Activated T-helper 1 cell treated with anti-CD3 and anti-CD28 coated beads, Interleukin-12 subunit alpha, Interleukin-12 subunit beta, Interleukin-2, Interleukin-4 antibody, amounts not matched to agents 30 ng/mL and 10 ng/mL and 1 ng/mL, durations not matched to agents 14 hours and 24 hours and 36 hours (primary cell): ENCODE measurements at regions of chr7 and their contacts with region 1.

Region 1: GRCh38 chr7:76234931-76235441 is 33.3 kb downstream of the SRRM3 start:
- DNase-seq: peak; percentile 75
- H3K4me3 Mint-ChIP-seq: peak overlapping the region; percentile 53
- H3K27ac Mint-ChIP-seq: no peak overlapping the region
- H3K4me1 Mint-ChIP-seq: no peaks in the 10 kb centered on the region
- H3K27me3 Mint-ChIP-seq: peaks cover 27% of the 10 kb centered on the region

Region 2: GRCh38 chr7:76011442-76011861 is 223.5 kb before region 1 on chr7:
- intact Hi-C with region 1: no loop called
- DNase-seq: no peak
- H3K4me3 Mint-ChIP-seq: no peak overlapping the region
- H3K27ac Mint-ChIP-seq: no peak overlapping the region
- H3K4me1 Mint-ChIP-seq: peaks cover 35% of the 10 kb centered on the region
- H3K27me3 Mint-ChIP-seq: peaks cover 5% of the 10 kb centered on the region

Region 3: GRCh38 chr7:76166404-76167255 is 68.4 kb before region 1 on chr7:
- intact Hi-C with region 1: loop called (anchors 2 kb)
- DNase-seq: peak; percentile 93
- H3K4me3 Mint-ChIP-seq: peak overlapping the region; percentile 85
- H3K27ac Mint-ChIP-seq: peak overlapping the region; percentile 85
- H3K4me1 Mint-ChIP-seq: peaks cover 10% of the 10 kb centered on the region
- H3K27me3 Mint-ChIP-seq: peaks cover 2% of the 10 kb centered on the region

Region 4: DNA sequence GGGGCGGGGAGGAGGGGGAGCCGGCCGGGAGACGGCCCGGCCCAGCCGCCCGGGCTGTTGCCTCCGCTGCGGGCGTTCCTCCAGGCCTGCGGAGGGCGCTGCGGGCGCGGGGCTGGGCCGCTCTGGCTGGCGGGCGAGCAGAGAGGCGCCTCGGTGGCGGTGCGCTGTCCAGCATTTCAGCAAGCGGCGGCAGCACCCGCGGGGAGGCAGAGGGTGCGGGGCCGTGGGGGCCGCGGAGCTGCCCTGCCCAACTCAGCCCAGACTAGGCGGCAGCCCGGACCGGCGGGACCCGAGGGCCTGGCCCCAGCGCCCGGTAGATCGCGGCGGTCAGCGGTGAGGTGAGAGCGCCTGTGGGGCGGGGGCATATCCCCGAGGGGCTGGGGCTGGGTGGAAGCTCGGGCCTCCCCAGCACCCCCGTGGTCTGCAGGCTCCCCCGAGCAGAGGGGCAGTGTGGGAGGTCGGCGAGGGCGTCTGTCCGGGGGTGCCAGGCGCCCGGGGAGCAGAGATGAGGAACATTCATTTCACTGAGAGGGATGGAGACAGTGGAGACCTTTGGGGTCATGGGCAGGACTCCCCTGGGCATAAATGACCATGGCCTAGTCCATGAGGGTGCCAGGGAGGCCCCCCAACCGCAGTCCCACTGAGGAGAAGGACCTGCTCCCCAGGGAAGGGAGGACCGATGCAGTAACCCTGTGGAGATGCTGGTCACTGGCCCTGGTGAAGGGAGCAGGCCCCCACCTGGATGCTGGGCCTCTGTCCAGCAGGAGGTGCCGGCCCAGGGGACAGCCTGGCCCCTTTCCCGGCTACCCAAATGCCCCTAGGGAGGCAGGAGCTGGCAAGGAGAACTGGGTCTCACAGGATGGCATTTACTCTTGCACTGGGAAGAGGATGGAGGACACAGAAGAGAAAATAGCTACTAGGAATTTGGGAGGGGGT is 33.0 kb before region 1 on chr7 and contains the start of gene SRRM3:
- intact Hi-C with region 1: loop called (anchors 5 kb)
- DNase-seq: peak; percentile 82
- H3K4me3 Mint-ChIP-seq: no peak within 1 kb of the TSS
- H3K27ac Mint-ChIP-seq: no peak within 1 kb of the TSS
- H3K4me1 Mint-ChIP-seq: no peaks in the 10 kb centered on the region
- H3K27me3 Mint-ChIP-seq: peaks cover 10% of the 10 kb centered on the region
- total RNA-seq, gene SRRM3: not detected in 2 replicates

Region 5: DNA sequence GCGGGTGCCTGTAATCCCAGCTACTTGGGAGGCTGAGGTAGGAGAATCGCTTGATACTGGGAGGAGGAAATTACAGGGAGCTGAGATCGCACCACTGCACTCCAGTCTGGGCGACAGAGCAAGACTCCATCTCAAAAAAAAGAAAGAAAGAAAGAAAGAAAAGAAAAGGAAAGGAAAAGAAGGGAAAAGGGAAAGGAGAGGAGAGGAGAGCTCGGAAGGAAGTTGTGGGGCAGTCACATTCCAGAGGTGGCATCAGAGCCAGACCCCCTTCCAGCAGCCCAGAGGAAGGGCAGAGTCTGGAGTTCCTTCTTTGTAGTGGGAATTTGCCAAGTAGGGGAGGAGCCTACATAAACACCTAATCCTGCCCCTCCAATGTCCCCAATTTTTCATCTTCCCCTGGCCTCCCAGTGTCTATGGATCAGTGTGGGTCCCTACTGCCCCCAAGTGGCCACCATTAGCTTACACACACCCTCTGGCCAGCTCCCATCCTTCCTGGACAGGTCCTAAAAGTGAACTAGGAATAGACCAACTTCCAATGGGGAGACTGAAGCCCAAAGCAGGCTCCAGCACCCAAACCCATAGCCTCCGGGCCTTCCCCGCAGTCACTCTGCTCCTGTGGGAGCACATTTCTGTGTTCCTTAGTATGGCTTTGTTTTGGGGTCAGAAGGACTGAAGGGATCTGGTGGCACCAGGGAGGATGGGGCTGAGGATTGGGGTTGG is 27.9 kb after region 1 on chr7:
- intact Hi-C with region 1: loop called (anchors 1 kb)
- DNase-seq: no peak
- H3K4me3 Mint-ChIP-seq: no peak overlapping the region
- H3K27ac Mint-ChIP-seq: no peak overlapping the region
- H3K4me1 Mint-ChIP-seq: peaks cover 7% of the 10 kb centered on the region
- H3K27me3 Mint-ChIP-seq: peaks cover 30% of the 10 kb centered on the region

Region 6: DNA sequence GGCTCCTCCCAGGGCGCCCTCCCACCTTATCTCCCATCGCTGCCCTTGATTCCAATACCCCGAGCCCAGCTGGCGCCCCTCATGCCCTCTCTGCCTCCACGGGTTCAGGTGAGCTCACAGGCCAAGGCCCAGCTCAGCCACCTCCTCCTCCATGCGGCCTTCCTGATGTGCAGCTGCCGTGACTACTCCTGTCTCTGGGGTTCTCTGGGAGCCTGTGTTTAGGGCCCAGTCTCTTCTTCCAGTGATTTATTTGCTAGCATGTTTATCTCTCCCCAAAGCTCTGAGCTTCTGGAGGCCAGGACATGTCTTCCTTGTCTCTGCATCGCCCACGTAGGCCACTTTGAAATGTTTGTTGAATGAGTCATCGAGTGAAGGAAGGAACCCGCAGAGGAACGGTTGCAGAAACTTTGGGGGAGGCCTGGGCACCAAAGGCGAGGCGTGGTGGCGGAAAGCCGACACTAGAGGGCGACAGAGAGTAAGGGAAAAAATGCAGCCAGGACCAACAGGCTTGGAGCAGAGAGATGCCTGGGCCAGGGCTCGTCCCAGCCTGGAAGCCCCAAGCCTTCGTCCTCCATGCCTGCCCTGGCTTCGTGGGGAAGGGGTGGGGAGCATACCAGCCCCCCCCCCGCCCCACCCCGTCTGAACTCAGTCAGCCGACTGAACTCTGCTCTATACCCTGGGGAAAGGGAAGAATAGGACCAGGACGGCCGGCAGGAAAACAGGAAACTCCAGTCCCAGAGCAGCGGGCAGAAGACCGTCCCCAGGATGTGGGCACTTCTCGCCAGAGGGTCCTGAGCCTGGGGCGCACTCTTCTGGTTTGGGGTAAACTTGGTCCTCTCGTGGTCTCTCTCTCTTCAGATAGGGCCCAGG is 56.6 kb after region 1 on chr7:
- intact Hi-C with region 1: loop called (anchors 2 kb)
- DNase-seq: peak; percentile 84
- H3K4me3 Mint-ChIP-seq: peak overlapping the region; percentile 43
- H3K27ac Mint-ChIP-seq: peak overlapping the region; percentile 64
- H3K4me1 Mint-ChIP-seq: peaks cover 13% of the 10 kb centered on the region
- H3K27me3 Mint-ChIP-seq: peaks cover 11% of the 10 kb centered on the region